ENCODE measurements at regions of chr3 and their contacts with region 1.

Region 1: GRCh38 chr3:62665598-62666437 is 209.4 kb downstream of the CADPS start:
- DNase-seq: peak; percentile 66
- ATAC-seq: peak; percentile 84 to 87

Region 2: DNA sequence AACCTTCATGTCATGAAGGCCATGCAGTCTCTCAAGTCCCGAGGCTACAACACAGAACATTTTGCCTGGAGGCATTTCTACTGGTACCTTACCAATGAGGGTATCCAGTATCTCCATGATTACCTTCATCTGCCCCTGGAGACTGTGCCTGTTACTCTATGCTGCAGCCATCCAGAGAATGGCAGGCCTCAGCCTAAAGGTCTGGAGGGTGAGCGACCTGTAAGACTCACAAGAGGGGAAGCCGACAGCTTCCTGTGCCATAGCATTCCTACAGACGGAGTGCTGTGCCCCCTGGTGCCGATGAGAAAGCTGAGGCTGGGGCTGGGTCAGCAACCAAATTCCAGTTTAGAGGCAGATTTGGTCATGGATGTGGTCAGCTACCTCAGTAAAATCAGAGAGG is 260.7 kb after region 1 on chr3:
- intact Hi-C with region 1: loop called in 1 of 2 experiments (anchors 5 kb)
- DNase-seq: no peak
- ATAC-seq: no peak

Region 3: GRCh38 chr3:62982795-62983455 is 317.1 kb after region 1 on chr3:
- intact Hi-C with region 1: no loop called
- DNase-seq: no peak
- ATAC-seq: no peak

Region 4: GRCh38 chr3:63193629-63194028 is 527.8 kb after region 1 on chr3:
- intact Hi-C with region 1: loop called in 1 of 2 experiments (anchors 5 kb)
- DNase-seq: no peak
- ATAC-seq: no peak

Region 5: DNA sequence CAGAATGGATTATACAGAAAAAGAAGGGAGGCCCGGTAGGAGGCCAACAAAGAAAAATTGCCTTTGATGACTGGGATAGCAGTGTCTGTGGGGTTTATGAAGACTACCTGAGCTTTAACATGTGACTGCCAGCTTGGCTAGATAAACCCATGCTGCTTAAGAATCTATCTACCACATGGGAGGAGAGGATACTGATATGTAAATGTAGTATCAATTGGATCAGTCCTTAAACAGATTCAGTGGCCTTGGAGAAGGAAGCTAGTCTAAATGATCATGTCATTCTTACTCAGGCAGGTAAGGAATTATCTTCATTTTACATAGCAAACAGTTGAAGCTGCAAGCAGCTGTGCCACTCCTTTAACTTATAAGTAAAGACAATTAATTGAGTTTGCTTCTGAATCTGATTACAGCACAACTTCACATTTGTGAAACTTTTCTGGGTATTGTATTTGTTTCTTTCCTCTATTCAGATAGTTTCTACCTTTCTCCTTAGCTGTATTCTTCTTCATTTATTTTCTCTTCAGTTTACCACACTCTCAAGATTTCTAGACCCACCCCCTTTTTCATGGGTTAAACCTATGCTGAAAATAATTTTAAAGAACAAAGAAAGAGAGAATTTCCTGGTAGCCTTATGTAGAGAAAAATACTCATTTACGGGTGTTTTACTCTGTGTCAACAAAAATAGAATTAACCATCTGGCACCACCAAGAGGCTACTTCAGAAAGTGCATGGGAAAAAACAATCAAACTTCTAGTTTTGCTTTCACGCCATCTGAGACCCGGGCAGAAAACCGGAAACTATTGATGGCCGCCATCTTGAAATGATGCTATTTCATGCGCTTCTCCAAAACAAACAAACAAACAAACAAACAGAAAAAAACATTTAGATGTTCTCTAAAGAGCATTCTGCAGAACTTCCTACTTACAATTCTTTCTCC is 562.5 kb after region 1 on chr3:
- intact Hi-C with region 1: loop called in 1 of 2 experiments (anchors 2 kb)
- DNase-seq: no peak
- ATAC-seq: peak; percentile 55 to 63

Region 6: GRCh38 chr3:63863148-63864007 is 1197.6 kb after region 1 on chr3 and contains the starts of genes ATXN7 and THOC7:
- intact Hi-C with region 1: no loop called
- DNase-seq: peak; percentile 79
- ATAC-seq: peak; percentile 90 to 91
- total RNA-seq, gene ATXN7: 13.0 to 22.2 TPM
- total RNA-seq, gene THOC7: 65.9 to 72.0 TPM